Right ventricle myocardium inferior (tissue), 1 donor: ENCODE measurements at regions of chr20 and their contacts with region 1.

Region 1: DNA sequence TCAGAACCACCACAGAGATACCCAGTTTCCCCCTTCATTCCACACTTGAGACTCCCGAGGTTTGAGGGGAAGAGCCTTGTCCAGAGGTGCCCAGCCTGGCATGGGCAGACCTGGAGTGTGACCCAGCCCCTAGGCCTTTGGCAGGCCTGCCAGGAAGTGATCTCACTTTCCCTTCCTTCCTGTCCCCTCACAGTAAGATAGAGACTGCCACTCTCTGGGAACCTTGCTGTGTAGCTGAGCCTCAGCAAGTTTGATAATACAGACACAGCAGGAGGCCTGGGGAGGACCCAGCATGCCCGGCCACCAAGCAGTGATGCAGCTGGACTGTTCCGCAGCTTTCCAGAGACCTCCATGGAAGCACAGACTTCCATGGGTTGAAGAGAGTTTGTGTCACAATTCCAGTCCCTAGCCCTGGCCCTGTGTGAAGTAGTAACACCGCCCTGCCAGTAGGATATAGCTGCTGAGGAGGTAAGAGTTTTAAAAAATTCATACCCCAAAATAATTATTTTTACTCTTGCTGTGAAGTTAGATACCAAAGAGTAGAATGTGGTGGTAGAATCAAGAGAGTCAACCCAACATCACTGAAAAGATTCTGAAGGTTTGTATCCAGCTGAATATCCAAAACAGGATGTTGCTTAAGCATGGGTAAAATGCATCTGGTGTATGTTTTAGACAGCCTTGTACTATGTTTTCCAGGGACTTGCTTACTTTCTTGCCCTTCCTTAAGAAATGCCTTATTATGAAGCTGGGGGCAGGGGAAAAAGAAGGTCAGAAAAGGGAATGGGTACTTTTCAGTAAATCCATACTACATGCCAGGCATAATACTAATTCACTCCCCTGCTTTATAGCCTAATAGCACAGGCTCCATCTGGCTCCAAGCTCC is 16.3 kb downstream of the PKIG start:
- DNase-seq: no peak
- ATAC-seq: peak; percentile 45

Region 2: GRCh38 chr20:44407402-44408184 is 191.1 kb before region 1 on chr20:
- intact Hi-C with region 1: no loop called
- DNase-seq: no peak
- ATAC-seq: no peak

Region 3: GRCh38 chr20:44460795-44461141 is 137.9 kb before region 1 on chr20:
- intact Hi-C with region 1: no loop called
- DNase-seq: no peak
- ATAC-seq: no peak

Region 4: GRCh38 chr20:44495257-44495656 is 103.4 kb before region 1 on chr20:
- intact Hi-C with region 1: no loop called
- DNase-seq: no peak
- ATAC-seq: no peak

Region 5: GRCh38 chr20:44582311-44583025 is 16.2 kb before region 1 on chr20 and contains the start of gene PKIG:
- intact Hi-C with region 1: loop called (anchors 2 kb)
- DNase-seq: no peak
- ATAC-seq: peak; percentile 87
- total RNA-seq, gene PKIG: 206 TPM